Naive thymus-derived CD4-positive, alpha-beta T cell (primary cell): ENCODE measurements at regions of chr1 and their contacts with region 1.

Region 1: GRCh38 chr1:89274411-89274857 is 1.8 kb upstream of the GBP5 start:
- DNase-seq: peak in 2 of 9 donors; percentile 21 to 55
- ATAC-seq: peak; percentile 63
- H3K4me3 ChIP-seq: peak overlapping the region; percentile 40
- H3K4me3 Mint-ChIP-seq: peak overlapping the region; percentile 73 to 90 (median 80)
- H3K27ac ChIP-seq: peak overlapping the region; percentile 60
- H3K27ac Mint-ChIP-seq: peak overlapping the region; percentile 90 to 98 (median 95)
- H3K4me1 ChIP-seq: peaks cover 48 to 49% of the 10 kb centered on the region in 2 donors
- H3K4me1 Mint-ChIP-seq: peaks cover 44 to 92% (median 78%) of the 10 kb centered on the region in 7 donors
- H3K27me3 ChIP-seq: no peaks in the 10 kb centered on the region
- H3K27me3 Mint-ChIP-seq: no peaks in the 10 kb centered on the region

Region 2: GRCh38 chr1:88847643-88848042 is 426.8 kb before region 1 on chr1:
- CTCF ChIA-PET with region 1: no interaction called
- POLR2A ChIA-PET with region 1: no interaction called
- intact Hi-C with region 1: no loop called
- DNase-seq: no peak
- ATAC-seq: no peak
- H3K4me3 ChIP-seq: no peak overlapping the region
- H3K4me3 Mint-ChIP-seq: no peak overlapping the region
- H3K27ac ChIP-seq: no peak overlapping the region
- H3K27ac Mint-ChIP-seq: peak overlapping the region in 1 of 9 donors; percentile 10
- H3K4me1 ChIP-seq: no peaks in the 10 kb centered on the region
- H3K4me1 Mint-ChIP-seq: peaks cover 0 to 3% (median 0%) of the 10 kb centered on the region in 7 donors
- H3K27me3 ChIP-seq: no peaks in the 10 kb centered on the region
- H3K27me3 Mint-ChIP-seq: no peaks in the 10 kb centered on the region

Region 3: DNA sequence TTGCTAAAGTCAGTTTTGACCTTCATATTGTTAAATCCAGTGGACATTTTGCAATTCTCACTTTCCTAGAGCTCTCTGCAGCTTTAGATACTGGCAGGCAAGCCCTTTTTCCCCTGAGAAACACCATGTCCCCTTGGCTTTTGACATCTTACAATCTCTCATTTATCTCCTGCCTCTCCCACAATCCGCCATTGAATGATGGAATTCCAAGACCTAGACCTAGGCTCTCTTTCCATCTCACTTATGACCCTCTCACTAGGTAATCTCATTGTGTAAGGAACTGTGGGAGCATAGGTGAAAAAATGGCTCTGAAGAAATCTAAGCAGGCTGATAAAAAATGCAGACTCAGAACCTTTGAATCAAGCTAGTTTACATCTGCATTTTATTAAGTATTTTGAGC is 284.0 kb before region 1 on chr1:
- CTCF ChIA-PET with region 1: interaction called, 4 read pairs
- POLR2A ChIA-PET with region 1: interaction called, 13 read pairs
- intact Hi-C with region 1: no loop called
- DNase-seq: no peak
- ATAC-seq: no peak
- H3K4me3 ChIP-seq: no peak overlapping the region
- H3K4me3 Mint-ChIP-seq: peak overlapping the region in 4 of 10 donors; percentile 1 to 42 (median 23)
- H3K27ac ChIP-seq: no peak overlapping the region
- H3K27ac Mint-ChIP-seq: peak overlapping the region in 6 of 9 donors; percentile 61 to 90 (median 78)
- H3K4me1 ChIP-seq: peaks cover 15 to 28% of the 10 kb centered on the region in 2 donors
- H3K4me1 Mint-ChIP-seq: peaks cover 24 to 56% (median 45%) of the 10 kb centered on the region in 7 donors
- H3K27me3 ChIP-seq: no peaks in the 10 kb centered on the region
- H3K27me3 Mint-ChIP-seq: no peaks in the 10 kb centered on the region

Region 4: GRCh38 chr1:89085781-89086180 is 188.7 kb before region 1 on chr1:
- CTCF ChIA-PET with region 1: interaction called, 9 read pairs
- POLR2A ChIA-PET with region 1: interaction called, 3 read pairs
- intact Hi-C with region 1: loop called (anchors 1 to 10 kb)
- DNase-seq: peak in 6 of 9 donors; percentile 30 to 69 (median 42)
- ATAC-seq: peak; percentile 84
- H3K4me3 ChIP-seq: no peak overlapping the region
- H3K4me3 Mint-ChIP-seq: no peak overlapping the region
- H3K27ac ChIP-seq: no peak overlapping the region
- H3K27ac Mint-ChIP-seq: no peak overlapping the region
- H3K4me1 ChIP-seq: no peaks in the 10 kb centered on the region
- H3K4me1 Mint-ChIP-seq: peaks cover 0 to 12% (median 0%) of the 10 kb centered on the region in 7 donors
- H3K27me3 ChIP-seq: no peaks in the 10 kb centered on the region
- H3K27me3 Mint-ChIP-seq: peaks cover 0 to 2% (median 0%) of the 10 kb centered on the region in 5 donors

Region 5: GRCh38 chr1:89286549-89287180 is 12.2 kb after region 1 on chr1:
- CTCF ChIA-PET with region 1: interaction called, 13 read pairs
- POLR2A ChIA-PET with region 1: interaction called, 18 read pairs
- intact Hi-C with region 1: loop called (anchors 1 kb)
- DNase-seq: peak in 6 of 9 donors; percentile 25 to 65 (median 48)
- ATAC-seq: peak; percentile 77
- H3K4me3 ChIP-seq: peak overlapping the region; percentile 41
- H3K4me3 Mint-ChIP-seq: peak overlapping the region; percentile 63 to 83 (median 76)
- H3K27ac ChIP-seq: peak overlapping the region; percentile 63
- H3K27ac Mint-ChIP-seq: peak overlapping the region; percentile 76 to 96 (median 91)
- H3K4me1 ChIP-seq: peaks cover 40 to 52% of the 10 kb centered on the region in 2 donors
- H3K4me1 Mint-ChIP-seq: peaks cover 48 to 78% (median 74%) of the 10 kb centered on the region in 7 donors
- H3K27me3 ChIP-seq: no peaks in the 10 kb centered on the region
- H3K27me3 Mint-ChIP-seq: no peaks in the 10 kb centered on the region

Region 6: DNA sequence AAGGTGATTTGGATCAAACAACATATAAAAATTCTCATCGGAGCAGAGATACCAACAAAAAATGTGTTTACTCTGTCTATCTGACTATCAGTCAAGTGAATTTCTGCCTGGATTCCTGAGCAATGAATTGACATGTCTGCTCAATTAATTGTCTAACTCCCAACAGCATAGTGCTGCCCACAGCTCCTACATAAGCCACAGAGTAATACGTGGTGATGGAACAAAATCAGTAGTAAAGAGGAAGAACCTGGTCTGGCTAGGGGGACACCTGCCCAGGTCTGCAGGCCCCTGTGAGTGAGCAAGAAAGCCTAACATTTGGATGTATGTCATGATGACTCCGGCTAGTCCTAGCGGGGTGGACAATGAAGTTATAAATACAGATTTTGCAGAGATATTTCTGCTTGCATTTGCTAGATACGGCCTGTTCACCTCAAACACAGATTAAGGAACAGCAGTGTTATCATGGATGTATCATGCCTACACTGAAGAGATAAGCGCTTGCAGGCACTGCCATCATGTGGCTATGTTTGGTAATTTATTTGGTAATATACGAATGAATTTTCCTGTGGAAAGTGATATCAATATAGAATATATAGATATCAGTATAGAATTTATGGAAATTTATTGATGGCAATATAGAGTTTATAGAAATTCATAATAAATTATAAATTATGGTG is 180.5 kb after region 1 on chr1:
- CTCF ChIA-PET with region 1: no interaction called
- POLR2A ChIA-PET with region 1: interaction called, 6 read pairs
- intact Hi-C with region 1: loop called (anchors 1 to 5 kb)
- DNase-seq: peak in 8 of 9 donors; percentile 46 to 75 (median 66)
- ATAC-seq: peak; percentile 94
- H3K4me3 ChIP-seq: no peak overlapping the region
- H3K4me3 Mint-ChIP-seq: no peak overlapping the region
- H3K27ac ChIP-seq: no peak overlapping the region
- H3K27ac Mint-ChIP-seq: peak overlapping the region in 1 of 9 donors; percentile 38
- H3K4me1 ChIP-seq: no peaks in the 10 kb centered on the region
- H3K4me1 Mint-ChIP-seq: peaks cover 4 to 23% (median 9%) of the 10 kb centered on the region in 7 donors
- H3K27me3 ChIP-seq: no peaks in the 10 kb centered on the region
- H3K27me3 Mint-ChIP-seq: peaks cover under 1 to 45% (median 11%) of the 10 kb centered on the region in 5 donors

Region 7: GRCh38 chr1:89598450-89599331 is 324.3 kb after region 1 on chr1:
- CTCF ChIA-PET with region 1: no interaction called
- POLR2A ChIA-PET with region 1: no interaction called
- intact Hi-C with region 1: no loop called
- DNase-seq: peak in 5 of 9 donors; percentile 19 to 43 (median 35)
- ATAC-seq: peak; percentile 82
- H3K4me3 ChIP-seq: no peak overlapping the region
- H3K4me3 Mint-ChIP-seq: peak overlapping the region in 8 of 10 donors; percentile 1 to 67 (median 48)
- H3K27ac ChIP-seq: no peak overlapping the region
- H3K27ac Mint-ChIP-seq: peak overlapping the region; percentile 51 to 99 (median 79)
- H3K4me1 ChIP-seq: peaks cover 17 to 55% of the 10 kb centered on the region in 2 donors
- H3K4me1 Mint-ChIP-seq: peaks cover 42 to 98% (median 92%) of the 10 kb centered on the region in 7 donors
- H3K27me3 ChIP-seq: no peaks in the 10 kb centered on the region
- H3K27me3 Mint-ChIP-seq: no peaks in the 10 kb centered on the region

Region 8: GRCh38 chr1:89823679-89824292 is 549.4 kb after region 1 on chr1:
- CTCF ChIA-PET with region 1: no interaction called
- POLR2A ChIA-PET with region 1: no interaction called
- intact Hi-C with region 1: no loop called
- DNase-seq: no peak
- ATAC-seq: no peak
- H3K4me3 ChIP-seq: no peak overlapping the region
- H3K4me3 Mint-ChIP-seq: no peak overlapping the region
- H3K27ac ChIP-seq: no peak overlapping the region
- H3K27ac Mint-ChIP-seq: peak overlapping the region in 5 of 9 donors; percentile 1 to 50 (median 2)
- H3K4me1 ChIP-seq: peaks cover 7 to 14% of the 10 kb centered on the region in 2 donors
- H3K4me1 Mint-ChIP-seq: peaks cover 18 to 41% (median 34%) of the 10 kb centered on the region in 7 donors
- H3K27me3 ChIP-seq: no peaks in the 10 kb centered on the region
- H3K27me3 Mint-ChIP-seq: peaks cover 0 to 13% (median 0%) of the 10 kb centered on the region in 5 donors